ENCODE measurements at regions of chr15 and their contacts with region 1.

Region 1: DNA sequence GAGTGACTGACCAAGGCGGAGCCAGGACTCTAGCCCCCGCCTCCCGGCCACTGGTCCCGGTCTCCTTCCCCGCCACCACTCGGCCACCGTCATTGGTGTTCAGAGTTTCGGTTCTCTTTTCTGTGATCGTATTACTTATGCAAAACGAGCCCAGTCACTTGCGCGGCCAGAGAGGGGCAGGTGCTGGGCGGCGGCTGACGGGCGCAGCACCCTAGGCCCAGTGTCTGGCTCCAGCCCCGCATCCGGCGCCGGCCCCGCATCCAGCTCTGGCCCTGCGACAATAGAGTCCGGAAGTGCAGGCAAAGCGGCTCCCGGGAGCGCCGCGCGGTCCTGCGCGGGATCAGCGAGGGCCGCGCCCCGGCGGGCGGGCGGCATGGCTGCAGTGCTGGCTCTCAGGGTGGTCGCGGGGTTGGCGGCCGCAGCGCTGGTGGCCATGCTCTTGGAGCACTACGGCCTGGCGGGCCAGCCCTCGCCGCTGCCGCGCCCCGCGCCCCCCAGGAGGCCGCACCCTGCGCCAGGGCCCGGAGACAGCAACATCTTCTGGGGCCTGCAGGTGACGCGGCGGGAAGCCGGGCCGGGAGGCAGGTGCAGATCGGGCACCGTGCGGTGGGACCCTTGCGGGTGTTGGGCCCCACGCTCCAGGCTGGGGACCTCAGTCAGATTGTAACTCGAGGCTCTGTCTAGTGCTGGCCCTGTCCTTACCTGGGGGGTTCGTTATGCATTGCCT is at the start of gene TMEM62:
- DNase-seq: peak; percentile 65
- H3K4me3 ChIP-seq: peak within 1 kb of the TSS; percentile 17 to 73 (median 64)
- H3K27ac ChIP-seq: peak within 1 kb of the TSS; percentile 12
- H3K4me1 ChIP-seq: peaks cover 11% of the 10 kb centered on the region
- H3K27me3 ChIP-seq: no peaks in the 10 kb centered on the region
- CTCF ChIP-seq: no peak
- POLR2A ChIP-seq: no peak
- total RNA-seq, gene TMEM62: 17.6 and 22.2 TPM in 2 replicates

Region 2: GRCh38 chr15:43029476-43029875 is 104.1 kb before region 1 on chr15:
- CTCF ChIA-PET with region 1: no interaction called
- POLR2A ChIA-PET with region 1: no interaction called
- dilution Hi-C with region 1: no loop called
- intact Hi-C with region 1: no loop called
- DNase-seq: no peak
- H3K4me3 ChIP-seq: no peak overlapping the region
- H3K27ac ChIP-seq: no peak overlapping the region
- H3K4me1 ChIP-seq: no peaks in the 10 kb centered on the region
- H3K27me3 ChIP-seq: no peaks in the 10 kb centered on the region
- CTCF ChIP-seq: no peak
- POLR2A ChIP-seq: no peak

Region 3: GRCh38 chr15:43150191-43150929 is 16.8 kb after region 1 on chr15:
- CTCF ChIA-PET with region 1: no interaction called
- POLR2A ChIA-PET with region 1: no interaction called
- dilution Hi-C with region 1: no loop called
- intact Hi-C with region 1: loop called (anchors 1 kb)
- DNase-seq: peak; percentile 78
- H3K4me3 ChIP-seq: no peak overlapping the region
- H3K27ac ChIP-seq: peak overlapping the region; percentile 79
- H3K4me1 ChIP-seq: peaks cover 10% of the 10 kb centered on the region
- H3K27me3 ChIP-seq: no peaks in the 10 kb centered on the region
- CTCF ChIP-seq: no peak
- POLR2A ChIP-seq: no peak